PC-3 (cell line): ENCODE measurements at regions of chr17 and their contacts with region 1.

Region 1: GRCh38 chr17:35063514-35064223 is at the start of gene RFFL:
- DNase-seq: peak; percentile 93
- ATAC-seq: peak; percentile 97
- H3K4me3 ChIP-seq: peak within 1 kb of the TSS; percentile 38; the same call in 1 of the 2 replicates
- H3K27ac ChIP-seq: peak within 1 kb of the TSS; percentile 100
- H3K4me1 ChIP-seq: peaks cover 28% of the 10 kb centered on the region
- H3K27me3 ChIP-seq: no peaks in the 10 kb centered on the region
- CTCF ChIP-seq: 0 out of 2 replicates have a peak, but pooled peaks have one; percentile 17
- total RNA-seq, gene RFFL: 37.7 and 46.4 TPM in 2 replicates

Region 2: DNA sequence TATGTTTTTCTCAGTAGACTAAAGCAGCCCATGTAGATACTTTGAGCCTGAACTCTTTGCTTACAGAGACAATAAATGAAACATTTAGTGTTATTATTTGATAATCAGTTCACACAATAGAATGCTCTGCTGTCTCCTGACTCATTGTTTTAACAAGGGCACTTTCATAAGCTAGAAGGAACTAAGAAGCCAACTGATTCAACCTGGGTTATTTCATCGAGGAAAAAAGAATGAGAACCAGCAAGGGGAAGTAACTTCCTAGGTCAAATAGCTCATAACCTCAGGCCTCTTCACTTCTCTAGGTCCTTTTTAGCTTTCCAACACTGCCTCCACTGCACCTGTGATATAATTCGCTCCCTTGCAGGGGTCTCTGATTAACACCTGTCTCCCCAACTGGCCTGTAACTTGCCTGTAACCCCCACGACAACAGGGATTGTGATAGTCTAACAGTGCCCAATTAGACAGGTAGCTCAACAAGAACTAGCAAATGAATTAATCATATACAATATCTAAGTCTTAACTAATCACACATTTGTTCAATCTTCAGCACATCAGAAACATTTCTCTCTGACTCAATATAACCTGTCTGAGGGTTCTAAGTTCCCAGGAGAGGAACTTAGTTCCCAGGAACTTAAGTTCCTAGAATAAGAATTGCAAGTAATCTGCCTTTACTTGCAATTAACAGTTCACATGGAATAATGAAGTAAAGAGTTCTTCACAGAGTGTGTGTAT is 35.0 kb before region 1 on chr17:
- CTCF ChIA-PET with region 1: no interaction called
- POLR2A ChIA-PET with region 1: no interaction called
- intact Hi-C with region 1: loop called (anchors 2 kb)
- DNase-seq: peak; percentile 39
- ATAC-seq: peak; percentile 82
- H3K4me3 ChIP-seq: no peak overlapping the region
- H3K27ac ChIP-seq: peak overlapping the region; percentile 24; the same call in 1 of the 2 replicates
- H3K4me1 ChIP-seq: peaks cover 30% of the 10 kb centered on the region
- H3K27me3 ChIP-seq: no peaks in the 10 kb centered on the region
- CTCF ChIP-seq: no peak

Region 3: DNA sequence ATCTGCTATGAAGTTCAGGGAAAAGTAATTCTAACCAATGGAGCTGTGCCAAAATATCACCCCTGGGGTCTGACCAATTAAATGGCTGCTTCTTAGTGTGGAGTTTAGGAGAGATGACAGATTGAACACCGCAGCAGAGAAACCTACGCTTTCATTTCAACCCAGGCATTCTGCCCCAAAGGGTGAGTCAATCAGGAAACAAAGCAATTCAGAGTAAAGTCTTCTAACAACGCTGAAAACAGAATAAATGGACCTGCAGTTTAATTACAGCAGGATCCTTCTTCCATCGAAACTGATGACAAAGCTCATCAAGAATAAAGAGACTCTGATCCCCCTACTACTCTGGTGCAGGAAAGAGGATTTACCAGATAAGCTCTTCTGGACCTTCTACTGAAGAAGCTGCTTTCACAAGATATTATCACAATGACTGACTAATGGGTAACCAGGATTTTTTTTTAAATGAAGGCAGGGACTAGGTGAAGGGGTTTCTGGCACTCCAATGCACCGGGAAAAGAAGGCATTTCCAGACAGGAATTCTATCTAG is 16.9 kb before region 1 on chr17:
- CTCF ChIA-PET with region 1: no interaction called
- POLR2A ChIA-PET with region 1: no interaction called
- intact Hi-C with region 1: no loop called
- DNase-seq: no peak
- ATAC-seq: no peak
- H3K4me3 ChIP-seq: no peak overlapping the region
- H3K27ac ChIP-seq: peak overlapping the region; percentile 11; the same call in 1 of the 2 replicates
- H3K4me1 ChIP-seq: peaks cover 11% of the 10 kb centered on the region; the same call in 1 of the 2 replicates
- H3K27me3 ChIP-seq: no peaks in the 10 kb centered on the region
- CTCF ChIP-seq: no peak

Region 4: DNA sequence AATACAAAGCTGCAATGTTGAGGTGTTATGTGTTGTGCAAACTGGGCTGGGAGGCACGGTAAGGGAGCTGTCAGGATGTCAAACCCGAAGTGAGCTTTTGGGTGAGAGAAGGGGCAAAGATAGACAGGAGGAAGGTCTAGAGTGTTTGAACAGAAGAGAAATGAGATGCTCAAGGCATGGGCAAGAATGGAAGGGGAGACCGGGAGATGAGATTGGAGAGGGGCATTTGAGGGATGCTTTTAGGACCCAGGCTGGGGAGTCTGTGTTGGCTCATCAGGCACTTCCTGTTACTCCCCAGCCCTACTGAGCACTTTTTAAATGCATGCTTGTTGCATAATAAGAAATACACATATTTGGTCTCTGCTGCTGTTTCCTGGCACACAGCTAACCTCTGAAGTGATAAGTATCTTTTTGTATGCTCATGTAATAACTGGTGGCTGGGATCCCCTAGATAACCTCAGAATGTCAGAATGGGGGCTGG is 97.7 kb after region 1 on chr17:
- CTCF ChIA-PET with region 1: no interaction called
- POLR2A ChIA-PET with region 1: no interaction called
- intact Hi-C with region 1: no loop called
- DNase-seq: no peak
- ATAC-seq: no peak
- H3K4me3 ChIP-seq: no peak overlapping the region
- H3K27ac ChIP-seq: no peak overlapping the region
- H3K4me1 ChIP-seq: no peaks in the 10 kb centered on the region
- H3K27me3 ChIP-seq: peaks cover 13% of the 10 kb centered on the region
- CTCF ChIP-seq: no peak